ENCODE measurements at regions of chr7 and their contacts with region 1.

Region 1: GRCh38 chr7:116588641-116589594 is 64.1 kb downstream of the CAV1 start:
- DNase-seq: no peak
- H3K4me3 ChIP-seq: no peak overlapping the region
- H3K27ac ChIP-seq: no peak overlapping the region
- H3K4me1 ChIP-seq: peaks cover 3 to 6% of the 10 kb centered on the region in 2 donors
- H3K27me3 ChIP-seq: no peaks in the 10 kb centered on the region
- CTCF ChIP-seq: peak; percentile 65 to 87 (median 79)
- POLR2A ChIP-seq: no peak

Region 2: DNA sequence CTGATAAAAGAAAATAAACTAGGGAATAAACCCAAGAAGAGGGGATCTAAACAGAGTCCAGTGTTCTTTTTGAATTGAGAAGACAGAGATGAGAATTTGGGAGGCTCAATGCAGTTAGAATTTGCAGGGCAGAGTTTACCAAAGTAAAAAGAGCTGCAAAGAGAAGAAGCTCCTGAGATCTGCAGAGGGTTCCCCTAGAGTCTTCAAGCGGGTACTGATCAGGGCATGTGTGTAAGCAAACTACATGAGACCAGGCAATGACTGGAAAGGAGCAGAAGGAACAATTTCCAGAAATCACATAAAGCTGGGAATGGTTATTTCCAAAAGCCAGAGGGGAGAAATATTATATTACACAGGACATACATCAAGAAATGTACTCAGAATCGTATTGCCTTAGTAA is 436.6 kb before region 1 on chr7:
- intact Hi-C with region 1: no loop called
- DNase-seq: no peak
- H3K4me3 ChIP-seq: no peak overlapping the region
- H3K27ac ChIP-seq: no peak overlapping the region
- H3K4me1 ChIP-seq: no peaks in the 10 kb centered on the region
- H3K27me3 ChIP-seq: no peaks in the 10 kb centered on the region
- CTCF ChIP-seq: no peak
- POLR2A ChIP-seq: no peak

Region 3: GRCh38 chr7:116162992-116163391 is 425.9 kb before region 1 on chr7:
- intact Hi-C with region 1: no loop called
- DNase-seq: no peak
- H3K4me3 ChIP-seq: no peak overlapping the region
- H3K27ac ChIP-seq: no peak overlapping the region
- H3K4me1 ChIP-seq: no peaks in the 10 kb centered on the region
- H3K27me3 ChIP-seq: no peaks in the 10 kb centered on the region
- CTCF ChIP-seq: no peak
- POLR2A ChIP-seq: no peak

Region 4: GRCh38 chr7:116173051-116174028 is 415.6 kb before region 1 on chr7:
- intact Hi-C with region 1: loop called in 1 of 2 experiments (anchors 10 kb)
- DNase-seq: peak in 1 of 7 donors; percentile 12
- H3K4me3 ChIP-seq: no peak overlapping the region
- H3K27ac ChIP-seq: no peak overlapping the region
- H3K4me1 ChIP-seq: no peaks in the 10 kb centered on the region
- H3K27me3 ChIP-seq: no peaks in the 10 kb centered on the region
- CTCF ChIP-seq: peak; percentile 36 to 77 (median 66)
- POLR2A ChIP-seq: no peak

Region 5: GRCh38 chr7:116258734-116259133 is 330.2 kb before region 1 on chr7:
- intact Hi-C with region 1: loop called (anchors 5 kb)
- DNase-seq: peak in 6 of 7 donors; percentile 19 to 45 (median 28)
- H3K4me3 ChIP-seq: no peak overlapping the region
- H3K27ac ChIP-seq: no peak overlapping the region
- H3K4me1 ChIP-seq: peaks cover 0 to 3% of the 10 kb centered on the region in 2 donors
- H3K27me3 ChIP-seq: no peaks in the 10 kb centered on the region
- CTCF ChIP-seq: peak; percentile 74 to 91 (median 87)
- POLR2A ChIP-seq: no peak

Region 6: GRCh38 chr7:117479225-117480054 is 890.5 kb after region 1 on chr7 and contains the start of gene CFTR:
- intact Hi-C with region 1: no loop called
- DNase-seq: peak in 1 of 7 donors; percentile 9
- H3K4me3 ChIP-seq: peak within 1 kb of the TSS in 1 of 4 donors; percentile 28
- H3K27ac ChIP-seq: no peak within 1 kb of the TSS
- H3K4me1 ChIP-seq: no peaks in the 10 kb centered on the region
- H3K27me3 ChIP-seq: peaks cover 6% of the 10 kb centered on the region
- CTCF ChIP-seq: no peak
- POLR2A ChIP-seq: no peak
- total RNA-seq, gene CFTR: 0.08 to 0.22 TPM in 2 of 9 donors, not detected in the others

Measured in adrenal gland (tissue), 19 donors.